ENCODE measurements at regions of chr9 and their contacts with region 1.

Region 1: GRCh38 chr9:92764988-92765936 is 629 bp upstream of the BICD2 start:
- DNase-seq: peak; percentile 96
- ATAC-seq: peak; percentile 80
- H3K4me3 ChIP-seq: peak overlapping the region; percentile 56
- H3K27ac ChIP-seq: peak overlapping the region; percentile 78
- H3K4me1 ChIP-seq: peaks cover 9% of the 10 kb centered on the region
- H3K27me3 ChIP-seq: no peaks in the 10 kb centered on the region; the same call in 1 of the 2 replicates
- CTCF ChIP-seq: peak; percentile 98
- POLR2A ChIP-seq: peak; percentile 90
- RAD21 ChIP-seq: peak; percentile 65

Region 2: DNA sequence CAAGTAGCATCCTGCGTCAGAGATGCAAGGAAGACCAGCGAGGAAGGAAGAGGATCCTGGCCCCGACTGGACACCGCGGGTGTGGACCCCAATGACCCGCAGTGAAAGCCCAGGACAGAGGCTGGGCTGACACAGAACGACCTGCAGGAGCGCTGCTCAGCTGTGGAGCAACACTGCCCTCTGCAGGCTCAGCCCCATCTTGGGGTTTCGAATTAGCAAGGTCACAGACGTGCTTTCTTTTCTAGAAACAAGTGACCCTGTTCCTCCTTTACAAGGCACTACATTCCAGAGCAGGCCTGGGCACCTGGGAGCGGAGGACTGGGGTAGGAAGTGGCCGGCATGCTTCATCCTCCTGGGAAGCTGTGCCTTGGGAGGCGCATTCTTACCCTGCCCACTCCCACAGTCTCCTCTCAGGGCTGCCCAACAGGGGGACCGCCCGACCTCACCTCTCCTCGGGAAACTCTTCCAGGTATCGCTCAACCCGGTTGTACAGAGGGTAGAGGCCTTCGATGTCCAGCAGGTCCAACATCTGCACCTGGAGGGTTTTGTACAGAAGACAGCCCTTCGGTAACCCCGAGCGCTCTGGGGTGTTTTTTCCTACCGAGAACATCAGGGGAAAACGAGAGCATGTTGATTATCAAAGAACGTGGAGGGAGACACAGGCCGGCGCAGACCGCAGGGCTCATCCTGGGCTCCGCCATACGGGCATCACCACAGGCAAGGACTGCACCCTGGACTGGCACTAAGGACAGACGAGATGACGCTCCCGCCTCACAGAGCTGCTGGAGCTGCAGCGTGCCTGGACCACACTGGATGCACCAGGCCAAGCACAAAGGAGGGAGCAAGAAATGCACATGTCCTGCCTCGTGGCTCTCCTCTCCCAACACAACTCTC is 130.3 kb before region 1 on chr9:
- CTCF ChIA-PET with region 1: no interaction called
- POLR2A ChIA-PET with region 1: no interaction called
- dilution Hi-C with region 1: no loop called
- in situ Hi-C with region 1: no loop called
- intact Hi-C with region 1: no loop called
- DNase-seq: peak; percentile 70
- ATAC-seq: peak; percentile 99
- H3K4me3 ChIP-seq: no peak overlapping the region
- H3K27ac ChIP-seq: no peak overlapping the region
- H3K4me1 ChIP-seq: no peaks in the 10 kb centered on the region
- H3K27me3 ChIP-seq: no peaks in the 10 kb centered on the region
- CTCF ChIP-seq: peak; percentile 99
- POLR2A ChIP-seq: peak; percentile 50; the same call in 1 of the 2 replicates
- RAD21 ChIP-seq: peak; percentile 98

Region 3: DNA sequence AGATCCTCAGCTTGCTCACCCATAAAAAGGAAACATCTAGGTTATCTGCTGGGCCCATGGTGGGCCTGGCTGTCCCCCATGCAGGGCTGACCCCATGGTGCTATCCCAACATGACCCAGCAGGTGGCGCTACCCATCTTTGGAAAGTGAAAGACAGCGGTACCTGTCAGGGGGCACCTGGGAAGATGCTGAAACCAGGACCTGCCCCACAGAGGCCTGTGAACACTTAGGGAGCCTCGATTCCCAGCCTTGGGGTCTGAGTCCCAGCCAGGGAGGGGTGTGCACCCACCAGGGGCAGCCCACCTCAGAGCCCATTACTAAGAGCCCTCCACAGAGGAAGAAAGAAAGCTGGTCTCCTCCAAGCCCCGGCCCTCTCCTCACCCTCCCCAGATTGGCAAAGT is 48.7 kb before region 1 on chr9:
- CTCF ChIA-PET with region 1: no interaction called
- POLR2A ChIA-PET with region 1: no interaction called
- dilution Hi-C with region 1: no loop called
- in situ Hi-C with region 1: no loop called
- intact Hi-C with region 1: no loop called
- DNase-seq: peak; percentile 21
- ATAC-seq: peak; percentile 88
- H3K4me3 ChIP-seq: no peak overlapping the region
- H3K27ac ChIP-seq: no peak overlapping the region
- H3K4me1 ChIP-seq: no peaks in the 10 kb centered on the region
- H3K27me3 ChIP-seq: no peaks in the 10 kb centered on the region
- CTCF ChIP-seq: peak; percentile 70
- POLR2A ChIP-seq: no peak
- RAD21 ChIP-seq: peak; percentile 81

Region 4: GRCh38 chr9:92728831-92729734 is 36.2 kb before region 1 on chr9:
- CTCF ChIA-PET with region 1: no interaction called
- POLR2A ChIA-PET with region 1: no interaction called
- dilution Hi-C with region 1: no loop called
- in situ Hi-C with region 1: no loop called
- intact Hi-C with region 1: loop called (anchors 5 kb)
- DNase-seq: peak; percentile 20
- ATAC-seq: peak; percentile 79
- H3K4me3 ChIP-seq: no peak overlapping the region
- H3K27ac ChIP-seq: no peak overlapping the region
- H3K4me1 ChIP-seq: peaks cover 3% of the 10 kb centered on the region
- H3K27me3 ChIP-seq: no peaks in the 10 kb centered on the region
- CTCF ChIP-seq: peak; percentile 54
- POLR2A ChIP-seq: no peak
- RAD21 ChIP-seq: peak; percentile 67

Region 5: DNA sequence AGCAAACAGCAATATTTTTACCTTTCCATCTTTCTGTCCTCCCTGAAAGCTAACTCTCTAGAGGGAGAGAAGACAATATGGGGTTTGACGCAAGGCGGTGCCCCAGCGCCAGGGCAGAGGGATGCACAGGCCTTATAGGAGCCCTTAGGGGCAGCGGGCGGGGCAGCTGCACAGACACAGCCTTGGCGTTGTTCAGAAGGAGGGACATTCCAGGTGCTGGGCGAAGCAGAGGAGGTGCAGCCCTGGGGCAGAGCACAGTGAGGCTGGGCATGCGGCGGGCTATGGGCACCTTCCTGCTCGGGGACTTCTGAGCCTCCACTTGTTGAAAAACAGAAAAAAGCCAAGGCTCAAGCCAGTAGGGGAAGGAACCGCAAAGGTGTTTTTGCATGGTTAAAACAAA is 33.1 kb after region 1 on chr9:
- CTCF ChIA-PET with region 1: no interaction called
- POLR2A ChIA-PET with region 1: no interaction called
- dilution Hi-C with region 1: no loop called
- in situ Hi-C with region 1: no loop called
- intact Hi-C with region 1: no loop called
- DNase-seq: no peak
- ATAC-seq: no peak
- H3K4me3 ChIP-seq: no peak overlapping the region
- H3K27ac ChIP-seq: no peak overlapping the region
- H3K4me1 ChIP-seq: no peaks in the 10 kb centered on the region
- H3K27me3 ChIP-seq: peaks cover 42% of the 10 kb centered on the region
- CTCF ChIP-seq: no peak
- POLR2A ChIP-seq: no peak
- RAD21 ChIP-seq: no peak

Region 6: GRCh38 chr9:92820964-92821363 is 55.7 kb after region 1 on chr9:
- CTCF ChIA-PET with region 1: no interaction called
- POLR2A ChIA-PET with region 1: no interaction called
- dilution Hi-C with region 1: no loop called
- in situ Hi-C with region 1: no loop called
- intact Hi-C with region 1: no loop called
- DNase-seq: no peak
- ATAC-seq: no peak
- H3K4me3 ChIP-seq: no peak overlapping the region
- H3K27ac ChIP-seq: no peak overlapping the region
- H3K4me1 ChIP-seq: no peaks in the 10 kb centered on the region
- H3K27me3 ChIP-seq: peaks cover 18% of the 10 kb centered on the region
- CTCF ChIP-seq: no peak
- POLR2A ChIP-seq: no peak
- RAD21 ChIP-seq: no peak